ENCODE measurements at regions of chr16 and their contacts with region 1.

Region 1: DNA sequence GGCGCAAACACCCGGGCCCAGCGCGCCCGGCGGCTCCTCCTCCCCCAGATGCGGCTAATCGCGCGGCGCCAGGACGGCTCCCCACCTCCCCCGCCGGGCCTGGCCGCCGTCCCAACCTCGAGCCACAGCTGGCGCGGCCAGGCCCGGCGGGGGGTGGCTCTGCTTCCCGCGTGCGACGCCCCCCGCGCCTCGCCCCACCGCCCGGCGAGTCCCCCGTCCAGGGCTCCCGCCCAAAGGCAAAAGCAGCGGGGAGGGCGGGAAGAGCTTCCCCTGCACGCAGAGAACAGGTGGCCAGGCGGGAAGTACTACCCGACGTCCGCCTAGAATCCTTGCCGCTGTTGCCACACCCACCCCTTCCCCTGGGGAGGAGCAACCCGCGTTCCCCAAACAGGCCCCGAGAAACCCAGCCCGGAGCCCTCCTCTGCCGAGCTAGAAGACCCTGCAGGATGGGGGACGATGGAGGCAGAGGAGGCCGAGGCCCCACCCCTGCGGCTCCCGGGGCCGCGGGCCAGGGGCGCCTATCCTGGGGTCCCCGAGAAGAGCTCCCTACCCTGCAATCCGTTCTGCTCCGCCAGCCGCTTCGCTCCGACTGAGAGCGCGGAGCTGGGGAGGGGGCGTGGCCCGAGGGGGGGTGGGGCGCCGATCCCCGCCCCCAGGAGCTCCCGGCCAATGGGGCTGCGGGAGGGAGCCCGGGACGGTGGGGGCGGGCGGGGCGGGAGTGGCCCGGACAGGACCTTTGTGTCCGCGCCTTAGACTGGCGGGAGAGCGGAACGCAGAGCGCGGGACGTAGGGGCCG is at the start of gene CARHSP1:
- DNase-seq: peak; percentile 53 to 93 (median 85)

Region 2: DNA sequence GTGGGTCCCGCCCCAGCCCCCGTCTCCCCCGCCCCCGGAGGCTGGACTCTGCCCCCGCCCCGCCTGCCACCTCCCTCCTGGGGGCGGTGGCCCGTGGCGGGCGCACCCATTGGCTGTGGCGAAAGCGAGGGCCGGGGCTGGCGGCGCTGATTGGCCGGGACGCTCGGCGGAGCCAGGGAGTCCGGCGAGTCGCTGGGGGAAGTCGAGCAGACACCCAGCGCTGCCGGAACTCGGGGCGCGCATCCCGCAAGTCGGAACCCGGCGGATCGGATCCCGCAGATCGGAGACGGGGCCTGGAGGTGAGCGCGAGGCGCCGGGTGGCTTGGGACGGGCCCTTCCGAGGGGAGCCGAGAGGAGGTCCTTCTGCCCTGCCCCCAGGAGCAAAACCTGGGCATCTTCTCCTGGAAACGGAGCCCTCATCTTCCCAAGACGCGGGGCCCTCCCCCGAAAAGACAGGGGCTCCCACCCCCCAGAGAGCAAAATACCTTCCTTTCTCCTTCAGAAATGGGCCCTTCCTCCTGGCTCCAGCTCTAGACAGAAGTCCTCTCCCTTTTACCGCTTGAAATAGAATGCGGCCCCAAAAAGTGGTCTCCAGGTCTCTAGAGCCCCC is 194.1 kb before region 1 on chr16 and contains the start of gene ABAT:
- intact Hi-C with region 1: loop called (anchors 10 kb)
- DNase-seq: peak; percentile 84 to 98 (median 96)

Region 3: DNA sequence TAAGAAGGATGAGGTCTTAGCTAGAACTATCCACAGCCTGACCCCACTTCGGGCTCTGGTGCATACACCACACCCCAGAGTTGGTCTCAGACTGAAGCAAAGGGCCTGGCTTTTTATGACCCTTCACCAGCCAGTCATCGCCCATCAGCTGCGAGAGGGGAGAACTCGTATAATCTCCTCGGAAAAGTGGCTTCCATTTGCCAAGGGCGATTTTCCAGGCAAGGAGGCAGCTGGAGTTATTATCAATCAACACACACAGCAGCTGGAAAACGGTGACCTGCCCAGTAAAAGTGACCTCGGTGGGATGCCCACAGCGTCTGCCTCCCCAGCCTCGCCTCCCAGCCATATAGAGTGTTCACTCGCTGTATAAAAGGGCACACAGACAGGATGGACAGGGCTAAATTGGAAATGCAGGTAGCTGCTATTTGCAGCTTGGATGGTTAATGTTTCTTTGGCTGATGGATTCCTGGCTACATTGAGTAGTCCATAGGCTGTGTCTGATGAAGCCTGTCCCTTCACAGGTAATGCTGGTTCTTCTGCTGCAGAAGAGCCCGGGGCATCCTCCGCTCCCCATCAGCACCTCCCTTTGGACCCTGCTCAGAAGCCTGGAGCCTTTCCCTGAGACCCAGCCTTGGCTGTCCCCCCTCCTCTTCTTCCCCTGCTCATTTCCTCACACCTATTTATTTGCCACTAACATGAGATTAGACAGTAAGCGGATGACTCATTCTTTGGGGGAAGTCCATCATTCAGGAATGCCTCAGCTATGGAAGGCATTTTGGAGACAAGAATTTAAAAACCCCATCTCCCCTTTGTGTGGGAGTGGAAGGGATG is 116.9 kb before region 1 on chr16:
- intact Hi-C with region 1: no loop called
- DNase-seq: no peak

Region 4: DNA sequence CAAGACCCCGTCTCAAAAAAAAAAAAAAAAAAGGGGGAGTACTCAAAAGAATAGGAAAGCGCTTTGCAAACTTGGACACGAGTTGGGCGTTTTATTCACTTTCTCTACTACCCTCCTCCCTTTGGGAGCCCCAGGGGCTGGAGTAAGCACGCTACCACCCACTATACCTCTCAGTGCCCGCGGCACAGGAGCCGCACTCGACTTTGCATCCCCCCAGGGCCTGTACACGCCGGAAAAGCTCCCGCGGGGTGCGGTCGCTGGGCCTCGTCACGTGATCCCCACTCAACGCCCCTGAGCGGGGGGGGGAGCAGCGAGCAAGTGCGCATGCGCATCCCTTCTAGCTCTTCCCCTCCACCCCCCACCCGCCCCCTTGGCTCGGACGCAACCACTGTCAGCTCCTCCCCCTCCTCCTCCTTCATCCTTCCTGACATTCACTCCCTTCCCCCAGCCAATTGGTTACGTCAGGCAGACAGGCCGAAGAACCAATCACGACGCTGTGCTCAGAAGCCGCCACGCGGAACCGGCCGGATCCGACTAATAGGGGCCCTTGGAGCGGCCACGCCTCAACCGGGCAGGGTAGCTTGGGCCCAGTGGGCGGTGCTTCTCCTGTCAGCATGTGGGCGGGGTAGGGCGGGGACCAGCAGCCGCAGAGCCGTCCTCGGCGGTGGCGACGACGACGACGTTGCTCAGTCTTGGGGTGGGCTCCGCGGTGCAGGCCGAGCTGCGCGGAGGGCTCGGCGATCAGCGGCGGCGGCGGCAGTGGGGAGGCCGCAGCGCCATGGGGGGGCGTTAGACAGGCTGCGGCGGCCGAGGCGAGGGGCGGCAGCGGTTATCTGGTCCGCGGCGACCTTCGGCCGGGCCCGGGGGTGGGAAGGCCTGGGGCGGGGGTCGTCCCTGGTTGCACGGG is 222.6 kb after region 1 on chr16 and contains the start of gene HAPSTR1:
- intact Hi-C with region 1: loop called (anchors 5 kb)
- DNase-seq: peak; percentile 98 to 100 (median 100)

Region 5: DNA sequence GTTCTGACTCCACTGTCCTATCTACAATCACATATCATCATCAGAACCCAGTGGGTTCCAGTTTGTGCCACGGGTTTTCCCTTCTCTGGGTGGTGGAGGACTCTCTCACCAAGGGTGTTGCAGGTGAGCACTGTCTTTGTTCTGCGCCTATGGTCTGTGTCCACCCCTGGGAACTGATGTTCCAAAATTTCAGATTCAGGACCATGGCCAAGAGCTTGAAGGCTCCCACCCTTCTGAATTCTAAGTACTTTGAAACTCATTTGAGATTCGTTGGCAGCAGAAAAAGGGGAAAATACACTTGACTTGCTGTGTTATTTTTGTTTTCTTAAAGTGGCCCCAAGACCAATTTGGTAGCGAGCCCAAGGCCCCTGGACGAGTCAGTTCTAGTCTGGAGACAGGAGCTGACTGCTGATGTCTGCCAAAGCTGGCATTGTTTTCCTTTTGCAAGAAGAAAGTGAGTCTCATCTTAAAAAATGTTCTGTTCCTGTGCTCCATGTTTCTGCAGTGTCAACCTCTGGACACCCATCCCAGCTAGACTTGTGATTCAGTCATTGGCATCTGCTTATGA is 533.8 kb after region 1 on chr16:
- intact Hi-C with region 1: no loop called
- DNase-seq: peak in 10 of 42 donors; percentile 5 to 65 (median 36)